ENCODE measurements at regions of chr14 and their contacts with region 1.

Region 1: GRCh38 chr14:76918751-76919543 is 92.7 kb downstream of the LRRC74A start:
- DNase-seq: peak; percentile 95 to 96
- ATAC-seq: peak; percentile 80 to 85
- H3K4me3 ChIP-seq: no peak overlapping the region
- H3K27ac ChIP-seq: peak overlapping the region; percentile 96 to 99
- H3K4me1 ChIP-seq: peaks cover 82% of the 10 kb centered on the region
- CTCF ChIP-seq: no peak
- EP300 ChIP-seq: peak; percentile 66 to 79; a peak in 3 of 5 replicates
- POLR2A ChIP-seq: no peak
- RAD21 ChIP-seq: peak; percentile 3 to 44; a peak in 2 of 5 replicates

Region 2: DNA sequence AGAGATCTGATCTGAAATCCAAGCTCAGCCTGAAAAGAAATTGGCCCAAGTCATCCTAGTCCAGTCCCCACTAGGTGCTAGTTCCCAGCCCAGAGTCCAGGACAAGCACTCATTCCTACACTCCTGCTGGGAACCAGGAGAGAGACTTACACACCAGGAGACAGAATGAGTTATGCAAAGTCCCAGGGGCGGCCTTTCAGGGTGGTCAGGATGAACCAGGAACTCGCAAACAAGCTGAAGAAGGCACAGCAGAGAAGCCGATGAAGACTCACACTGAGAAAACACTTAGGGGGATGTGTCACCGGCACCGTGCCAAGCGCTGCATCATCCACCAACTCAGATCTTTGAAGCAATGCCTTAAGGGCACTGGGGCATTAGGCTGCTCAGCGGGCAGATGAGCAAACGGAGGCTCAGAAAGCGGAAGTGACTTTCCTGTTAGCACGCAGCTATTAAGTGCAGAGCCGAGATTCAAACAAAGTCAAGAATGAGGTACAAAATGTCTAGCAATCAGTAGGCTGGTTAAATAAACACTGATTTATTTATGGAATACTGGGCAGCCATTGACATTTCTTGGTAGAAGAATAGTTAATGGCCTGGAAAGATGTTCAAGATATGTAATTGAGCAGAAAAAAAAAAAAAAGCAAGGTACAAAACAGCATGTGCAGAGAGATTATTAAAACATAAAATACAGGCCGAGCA is 14.1 kb before region 1 on chr14:
- CTCF ChIA-PET with region 1: interaction called, 678 read pairs
- POLR2A ChIA-PET with region 1: interaction called, 29 read pairs
- DNase-seq: peak; percentile 96 to 99
- ATAC-seq: peak; percentile 85 to 89
- H3K4me3 ChIP-seq: peak overlapping the region; percentile 30
- H3K27ac ChIP-seq: peak overlapping the region; percentile 96 to 97
- H3K4me1 ChIP-seq: peaks cover 48% of the 10 kb centered on the region
- CTCF ChIP-seq: no peak
- EP300 ChIP-seq: peak; percentile 91 to 97
- POLR2A ChIP-seq: no peak
- RAD21 ChIP-seq: peak; percentile 1 to 48; a peak in 3 of 5 replicates

Region 3: DNA sequence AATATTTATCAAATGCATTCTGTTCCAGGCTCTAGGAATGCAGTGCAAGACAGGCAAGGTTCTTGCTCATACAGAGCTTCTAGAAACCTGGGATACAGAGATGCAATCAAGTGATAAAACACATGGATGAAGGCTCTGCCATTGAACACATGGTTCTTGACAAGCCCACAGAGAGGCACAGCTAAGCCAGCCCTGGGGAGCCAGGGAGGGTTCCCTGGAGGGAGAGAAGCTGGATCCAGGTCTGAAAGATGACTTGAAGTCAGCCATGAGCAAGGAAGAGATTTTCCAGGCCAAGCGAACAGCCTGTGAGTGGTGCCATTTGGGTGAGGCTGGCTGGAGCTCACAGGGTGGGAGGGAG is 43.3 kb after region 1 on chr14:
- CTCF ChIA-PET with region 1: interaction called, 678 read pairs
- POLR2A ChIA-PET with region 1: interaction called, 63 read pairs
- DNase-seq: no peak
- ATAC-seq: peak; percentile 21 to 25; a peak in 5 of 6 replicates
- H3K4me3 ChIP-seq: peak overlapping the region; percentile 30
- H3K27ac ChIP-seq: peak overlapping the region; percentile 96 to 100
- H3K4me1 ChIP-seq: peaks cover 52% of the 10 kb centered on the region
- CTCF ChIP-seq: no peak
- EP300 ChIP-seq: no peak
- POLR2A ChIP-seq: no peak
- RAD21 ChIP-seq: no peak

Region 4: GRCh38 chr14:77023001-77023996 is 104.4 kb after region 1 on chr14:
- CTCF ChIA-PET with region 1: interaction called, 144 read pairs
- POLR2A ChIA-PET with region 1: interaction called, 78 read pairs
- DNase-seq: peak in 1 of 2 experiments; percentile 75
- ATAC-seq: peak in 1 of 2 experiments; percentile 50; a peak in 3 of 6 replicates
- H3K4me3 ChIP-seq: peak overlapping the region; percentile 78; the same call in 2 of the 3 replicates
- H3K27ac ChIP-seq: peak overlapping the region; percentile 95 to 99
- H3K4me1 ChIP-seq: peaks cover 31% of the 10 kb centered on the region
- CTCF ChIP-seq: no peak
- EP300 ChIP-seq: no peak; a peak in 1 of 5 replicates
- POLR2A ChIP-seq: no peak
- RAD21 ChIP-seq: peak; percentile 28 to 31; a peak in 2 of 5 replicates

Region 5: DNA sequence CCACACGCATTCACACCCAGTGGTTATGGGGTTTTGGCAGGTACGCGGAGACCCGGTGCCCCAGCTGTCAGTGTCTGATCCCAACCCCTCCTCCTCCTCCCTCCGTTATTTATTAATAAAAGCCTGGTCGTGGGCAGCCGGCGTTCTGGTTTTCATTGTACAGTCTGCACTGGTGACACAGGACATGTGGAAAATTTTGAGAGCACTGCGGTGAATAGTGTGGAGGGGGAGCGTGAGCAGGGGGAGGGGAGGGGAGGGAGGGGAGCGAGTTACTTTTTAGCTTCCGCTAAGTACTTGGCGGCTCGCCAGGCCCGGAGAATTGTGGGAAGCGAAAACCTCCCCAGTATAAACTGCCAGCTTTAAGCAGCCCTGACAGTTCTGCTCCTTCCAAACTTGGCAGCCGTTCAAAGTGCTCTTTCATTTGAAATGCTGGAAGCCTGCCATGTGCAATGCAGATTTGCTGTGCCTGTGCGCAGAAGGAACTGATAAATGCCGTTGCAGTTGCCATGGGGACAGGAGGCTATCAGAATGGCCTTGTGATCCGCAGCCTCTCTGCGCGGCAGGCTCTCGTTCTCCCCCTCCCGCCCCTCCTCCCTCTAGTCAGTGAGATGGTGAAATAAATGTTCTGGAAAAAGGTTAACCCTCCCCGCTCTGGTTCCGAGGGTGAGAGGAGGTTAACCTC is 121.3 kb after region 1 on chr14:
- CTCF ChIA-PET with region 1: interaction called, 38 read pairs
- POLR2A ChIA-PET with region 1: interaction called, 4 read pairs
- DNase-seq: peak; percentile 88 to 99
- ATAC-seq: peak; percentile 86 to 88
- H3K4me3 ChIP-seq: peak overlapping the region; percentile 36
- H3K27ac ChIP-seq: peak overlapping the region; percentile 90 to 99
- H3K4me1 ChIP-seq: peaks cover 86% of the 10 kb centered on the region
- CTCF ChIP-seq: no peak
- EP300 ChIP-seq: peak; percentile 18 to 68; a peak in 2 of 5 replicates
- POLR2A ChIP-seq: no peak
- RAD21 ChIP-seq: peak; percentile 8 to 31; a peak in 2 of 5 replicates

Region 6: DNA sequence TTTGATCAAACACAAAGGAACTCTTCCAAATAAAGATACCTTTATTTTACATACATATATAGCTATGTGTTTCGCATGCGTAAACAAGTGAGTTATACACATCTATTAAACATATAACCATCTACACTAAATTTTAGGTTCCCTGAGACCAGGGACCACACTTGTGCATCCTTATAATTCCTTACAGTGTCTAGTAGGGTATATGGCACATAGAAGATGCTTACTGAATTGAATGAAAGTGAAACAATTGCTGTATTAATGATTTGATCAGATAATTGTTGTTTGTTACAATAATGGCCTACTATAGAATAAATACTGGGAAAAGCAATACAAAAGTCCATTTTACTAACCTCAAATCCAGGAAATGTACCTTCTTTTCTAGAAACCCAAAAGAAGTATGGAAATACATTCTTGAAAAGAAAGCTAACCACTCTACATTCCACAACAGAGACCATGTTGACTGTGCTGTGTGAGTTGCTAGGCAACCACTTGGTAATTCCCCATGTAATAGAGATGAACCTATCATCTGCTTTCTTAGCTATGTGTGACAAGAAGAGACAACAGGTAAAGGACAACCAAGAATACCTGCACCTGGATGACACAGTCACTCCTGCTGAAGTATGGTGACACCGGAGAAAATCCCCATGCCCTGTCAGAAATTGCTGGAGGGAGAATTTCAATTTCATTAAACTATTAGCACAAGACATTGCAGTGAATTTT is 167.2 kb after region 1 on chr14:
- CTCF ChIA-PET with region 1: interaction called, 676 read pairs
- POLR2A ChIA-PET with region 1: no interaction called
- DNase-seq: peak in 1 of 2 experiments; percentile 35
- ATAC-seq: peak in 1 of 2 experiments; percentile 65; a peak in 3 of 6 replicates
- H3K4me3 ChIP-seq: no peak overlapping the region
- H3K27ac ChIP-seq: no peak overlapping the region
- H3K4me1 ChIP-seq: no peaks in the 10 kb centered on the region
- CTCF ChIP-seq: no peak
- EP300 ChIP-seq: no peak
- POLR2A ChIP-seq: no peak
- RAD21 ChIP-seq: no peak